Activated naive CD4-positive, alpha-beta T cell treated with anti-CD3 and anti-CD28 coated beads for 36 hours (primary cell): ENCODE measurements at regions of chr1 and their contacts with region 1.

Region 1: DNA sequence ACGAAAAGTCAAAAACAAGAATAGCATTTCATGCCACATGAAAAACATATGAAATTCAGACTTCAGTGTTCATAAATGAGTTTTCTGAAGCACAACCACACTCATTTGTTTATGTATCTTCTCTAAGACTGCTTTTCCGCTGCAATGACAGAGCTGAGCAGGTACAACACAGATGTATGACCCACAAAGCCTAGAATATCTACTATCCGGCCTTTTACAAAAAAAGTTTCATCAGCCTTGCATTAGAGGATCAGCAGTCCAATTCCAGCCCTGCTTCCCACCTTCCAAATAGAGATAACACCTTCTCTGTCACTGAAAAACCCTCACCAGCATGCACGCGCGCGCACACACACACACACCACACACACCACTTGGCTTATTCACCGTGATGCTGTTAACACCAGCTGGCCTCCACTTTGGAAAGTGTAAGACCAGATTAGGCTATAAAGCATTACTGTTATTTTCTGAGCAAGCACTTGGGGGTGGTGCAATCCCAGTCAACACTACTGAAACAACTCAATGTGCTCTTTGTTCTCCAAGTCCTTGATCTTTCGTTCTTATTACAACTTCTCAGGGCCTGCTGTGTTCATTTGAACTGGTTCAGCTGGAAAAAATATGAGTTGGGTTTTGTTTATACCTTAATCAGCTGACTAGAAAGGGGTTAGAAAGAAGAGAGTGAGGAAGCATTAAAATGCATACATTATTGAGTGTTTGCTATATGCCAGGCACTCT is 90.0 kb downstream of the GLUL start:
- DNase-seq: peak; percentile 74
- H3K4me3 Mint-ChIP-seq: no peak overlapping the region
- H3K27ac Mint-ChIP-seq: peak overlapping the region; percentile 73
- H3K4me1 Mint-ChIP-seq: peaks cover 29% of the 10 kb centered on the region
- H3K27me3 Mint-ChIP-seq: no peaks in the 10 kb centered on the region

Region 2: DNA sequence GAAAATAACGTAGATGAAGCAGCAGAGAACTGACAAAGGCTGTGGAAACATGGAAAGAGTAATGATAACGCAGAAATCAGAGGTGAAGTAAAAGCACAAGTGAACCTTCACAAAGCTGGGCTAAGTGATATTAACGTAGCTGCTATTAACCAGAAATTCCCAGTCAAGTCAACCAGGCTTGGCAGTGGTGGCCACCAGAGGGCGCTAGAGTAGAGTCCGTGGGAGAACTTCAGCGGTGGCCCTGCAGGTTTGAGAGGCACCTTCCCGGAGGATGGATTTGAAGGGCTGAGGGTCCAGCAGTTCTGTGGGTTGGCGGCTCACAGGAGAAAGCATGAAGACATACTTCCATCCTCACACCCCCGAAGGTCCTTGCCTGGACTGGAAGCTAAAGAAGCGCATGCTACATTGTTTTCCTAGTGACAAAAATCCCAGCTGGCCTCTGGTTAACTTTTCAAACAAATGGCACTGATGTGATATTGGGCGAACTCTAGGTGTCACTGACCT is 158.4 kb before region 1 on chr1:
- CTCF ChIA-PET with region 1: interaction called, 13 read pairs
- intact Hi-C with region 1: loop called (anchors 2 kb)
- DNase-seq: peak; percentile 95
- H3K4me3 Mint-ChIP-seq: no peak overlapping the region
- H3K27ac Mint-ChIP-seq: no peak overlapping the region
- H3K4me1 Mint-ChIP-seq: peaks cover 11% of the 10 kb centered on the region
- H3K27me3 Mint-ChIP-seq: no peaks in the 10 kb centered on the region

Region 3: DNA sequence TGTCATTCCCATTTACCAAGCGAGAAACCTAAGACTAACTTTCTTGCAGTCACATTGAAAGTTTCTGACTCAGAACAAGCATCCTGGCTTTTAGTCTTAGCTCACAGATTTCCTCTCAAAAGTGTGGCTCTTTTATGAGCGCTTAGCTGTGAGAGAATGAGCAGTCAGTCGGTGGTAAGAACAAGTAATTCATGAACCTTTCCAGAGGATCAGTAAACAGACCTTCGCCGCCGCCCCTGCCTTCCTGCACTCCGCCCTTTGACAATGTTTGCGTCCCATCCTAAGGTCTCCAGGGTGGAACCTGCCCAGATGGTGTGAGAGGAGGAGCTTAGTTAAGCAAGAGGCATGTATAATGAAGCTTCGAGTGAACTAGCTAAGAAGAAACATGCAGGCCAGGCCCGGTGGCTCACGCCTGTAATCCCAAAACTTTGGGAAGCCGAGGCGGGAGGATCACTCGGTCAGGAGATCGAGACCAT is 52.4 kb before region 1 on chr1:
- CTCF ChIA-PET with region 1: no interaction called
- intact Hi-C with region 1: loop called (anchors 1 kb)
- DNase-seq: peak; percentile 83
- H3K4me3 Mint-ChIP-seq: no peak overlapping the region
- H3K27ac Mint-ChIP-seq: peak overlapping the region; percentile 75
- H3K4me1 Mint-ChIP-seq: peaks cover 24% of the 10 kb centered on the region
- H3K27me3 Mint-ChIP-seq: no peaks in the 10 kb centered on the region

Region 4: DNA sequence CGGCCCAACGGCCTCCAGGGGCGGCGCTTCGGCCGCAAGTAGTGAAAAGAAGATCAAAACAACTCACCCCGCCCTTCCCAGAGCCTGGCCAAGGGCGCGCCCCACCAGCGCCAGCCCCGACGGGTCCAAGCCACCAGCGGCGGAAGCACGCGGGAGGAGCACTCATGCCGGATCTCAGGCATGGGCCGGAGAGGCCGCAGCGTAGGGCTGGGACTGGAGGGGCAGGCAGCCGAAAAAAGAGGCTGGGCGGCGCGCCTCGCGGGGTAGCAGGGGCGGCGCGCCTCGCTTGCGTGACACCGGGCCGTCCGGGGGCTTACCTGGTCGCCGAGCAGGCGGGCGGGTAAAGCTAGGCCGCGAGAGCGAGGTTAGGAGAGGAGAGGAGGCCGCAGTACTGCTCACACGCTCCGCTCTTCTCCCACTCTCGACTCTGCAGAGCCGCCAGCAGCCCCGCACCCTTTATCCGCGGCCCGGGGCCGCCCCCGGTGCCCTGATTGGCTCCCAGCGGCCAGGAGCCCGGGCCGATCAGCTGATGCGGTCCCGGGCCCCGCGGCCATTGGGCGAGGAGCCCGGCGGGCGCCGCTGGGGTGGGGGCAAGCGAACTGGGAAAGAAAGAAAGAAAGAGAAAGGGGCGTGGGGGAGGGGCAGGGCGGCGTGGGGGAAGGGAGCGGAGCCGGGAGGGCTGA is 89.9 kb after region 1 on chr1 and contains the start of gene GLUL:
- CTCF ChIA-PET with region 1: interaction called, 22 read pairs
- intact Hi-C with region 1: loop called (anchors 1 kb)
- DNase-seq: peak; percentile 76
- H3K4me3 Mint-ChIP-seq: peak within 1 kb of the TSS; percentile 87
- H3K27ac Mint-ChIP-seq: peak within 1 kb of the TSS; percentile 72
- H3K4me1 Mint-ChIP-seq: peaks cover 18% of the 10 kb centered on the region
- H3K27me3 Mint-ChIP-seq: no peaks in the 10 kb centered on the region
- total RNA-seq, gene GLUL: 71.5 to 73.1 TPM

Region 5: GRCh38 chr1:182588500-182589452 is 287.1 kb after region 1 on chr1 and contains the start of gene RNASEL:
- CTCF ChIA-PET with region 1: no interaction called
- intact Hi-C with region 1: loop called (anchors 5 kb)
- DNase-seq: peak; percentile 62
- H3K4me3 Mint-ChIP-seq: peak within 1 kb of the TSS; percentile 86
- H3K27ac Mint-ChIP-seq: peak within 1 kb of the TSS; percentile 98
- H3K4me1 Mint-ChIP-seq: peaks cover 49% of the 10 kb centered on the region
- H3K27me3 Mint-ChIP-seq: no peaks in the 10 kb centered on the region
- total RNA-seq, gene RNASEL: 2.5 TPM

Region 6: GRCh38 chr1:182781841-182782586 is 480.4 kb after region 1 on chr1:
- CTCF ChIA-PET with region 1: no interaction called
- intact Hi-C with region 1: loop called (anchors 1 kb)
- DNase-seq: peak; percentile 89
- H3K4me3 Mint-ChIP-seq: no peak overlapping the region
- H3K27ac Mint-ChIP-seq: no peak overlapping the region
- H3K4me1 Mint-ChIP-seq: peaks cover 18% of the 10 kb centered on the region
- H3K27me3 Mint-ChIP-seq: no peaks in the 10 kb centered on the region